ENCODE measurements at regions of chr6 and their contacts with region 1.

Region 1: GRCh38 chr6:15621203-15622044 is 41.4 kb downstream of the DTNBP1 start:
- DNase-seq: peak; percentile 58 to 72 (median 68)
- ATAC-seq: peak; percentile 81 to 95 (median 91)
- H3K4me3 ChIP-seq: no peak overlapping the region
- H3K27ac ChIP-seq: peak overlapping the region; percentile 50 to 87 (median 78)
- H3K4me1 ChIP-seq: peaks cover 0 to 40% (median 31%) of the 10 kb centered on the region in 12 donors
- H3K27me3 ChIP-seq: no peaks in the 10 kb centered on the region
- CTCF ChIP-seq: peak in 1 of 12 donors; percentile 8
- POLR2A ChIP-seq: no peak

Region 2: GRCh38 chr6:15254070-15254841 is 367.2 kb before region 1 on chr6:
- intact Hi-C with region 1: loop called in 6 of 10 experiments (anchors 5 to 10 kb)
- DNase-seq: no peak
- ATAC-seq: no peak
- H3K4me3 ChIP-seq: no peak overlapping the region
- H3K27ac ChIP-seq: peak overlapping the region in 1 of 12 donors; percentile 47
- H3K4me1 ChIP-seq: peaks cover 0 to 95% (median 45%) of the 10 kb centered on the region in 12 donors
- H3K27me3 ChIP-seq: no peaks in the 10 kb centered on the region
- CTCF ChIP-seq: peak in 1 of 12 donors; percentile 11
- POLR2A ChIP-seq: no peak

Region 3: GRCh38 chr6:15504581-15505350 is 116.7 kb before region 1 on chr6:
- intact Hi-C with region 1: loop called in 5 of 10 experiments (anchors 5 to 10 kb)
- DNase-seq: peak; percentile 75 to 81 (median 78)
- ATAC-seq: peak; percentile 72 to 87 (median 78)
- H3K4me3 ChIP-seq: peak overlapping the region in 10 of 12 donors; percentile 10 to 50 (median 33)
- H3K27ac ChIP-seq: peak overlapping the region; percentile 67 to 89 (median 79)
- H3K4me1 ChIP-seq: peaks cover 0 to 56% (median 43%) of the 10 kb centered on the region in 12 donors
- H3K27me3 ChIP-seq: no peaks in the 10 kb centered on the region
- CTCF ChIP-seq: no peak
- POLR2A ChIP-seq: no peak

Region 4: DNA sequence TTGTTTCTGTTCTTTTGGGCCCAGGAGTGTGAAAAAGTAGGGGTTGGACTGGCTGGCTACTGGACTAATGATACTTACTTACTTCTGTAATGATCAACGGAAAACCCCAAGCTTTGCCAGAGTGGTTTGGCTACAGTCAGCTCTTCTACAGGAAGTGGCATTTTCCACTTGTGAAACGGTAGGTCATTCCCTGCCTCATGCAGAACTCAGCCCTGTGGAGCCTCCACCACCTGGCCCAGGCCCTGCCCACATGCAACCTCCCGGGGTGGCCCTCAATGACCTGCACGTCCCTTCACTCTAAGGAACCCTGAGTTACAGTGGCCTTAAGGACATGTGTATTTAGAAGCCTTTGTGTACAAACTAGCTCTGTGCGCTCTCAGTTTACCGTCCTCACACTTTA is 99.0 kb before region 1 on chr6:
- intact Hi-C with region 1: loop called in 4 of 10 experiments (anchors 2 to 5 kb)
- DNase-seq: no peak
- ATAC-seq: peak in 2 of 4 donors; percentile 15 to 26
- H3K4me3 ChIP-seq: no peak overlapping the region
- H3K27ac ChIP-seq: peak overlapping the region in 2 of 12 donors; percentile 4 to 66
- H3K4me1 ChIP-seq: peaks cover 0 to 18% (median 3%) of the 10 kb centered on the region in 12 donors
- H3K27me3 ChIP-seq: no peaks in the 10 kb centered on the region
- CTCF ChIP-seq: no peak
- POLR2A ChIP-seq: no peak

Region 5: DNA sequence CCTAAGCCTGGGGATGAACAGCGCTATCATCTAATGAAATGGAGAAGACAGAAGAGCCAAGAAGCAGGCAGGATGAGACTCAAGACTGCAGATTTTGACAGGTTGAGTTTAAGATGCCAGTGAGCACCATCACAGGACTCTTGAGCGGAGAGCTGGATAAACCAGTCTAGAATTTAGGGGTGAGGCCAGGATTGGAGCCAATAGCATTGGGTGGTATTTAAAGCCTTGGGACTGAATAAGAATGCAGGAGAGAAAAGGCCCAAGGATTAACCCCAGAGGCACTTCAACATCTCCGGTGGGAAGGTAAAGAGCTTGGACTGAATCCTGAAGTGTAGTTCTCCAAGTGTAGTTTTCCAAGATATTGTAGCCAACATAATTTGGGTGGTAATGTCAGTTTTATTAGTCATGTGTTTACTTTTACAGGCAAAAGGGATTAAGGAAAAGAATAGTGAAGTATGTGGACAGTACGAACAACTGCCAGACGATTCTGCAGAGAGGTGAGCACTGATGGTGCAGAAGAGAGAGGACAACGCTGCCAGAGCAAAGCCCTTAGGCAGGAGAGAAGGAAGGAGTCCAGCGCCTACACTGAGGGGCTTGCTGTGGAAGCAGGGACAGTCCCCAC is 43.8 kb before region 1 on chr6:
- intact Hi-C with region 1: no loop called
- DNase-seq: no peak
- ATAC-seq: no peak
- H3K4me3 ChIP-seq: no peak overlapping the region
- H3K27ac ChIP-seq: no peak overlapping the region
- H3K4me1 ChIP-seq: peaks cover 0 to 35% (median 0%) of the 10 kb centered on the region in 12 donors
- H3K27me3 ChIP-seq: no peaks in the 10 kb centered on the region
- CTCF ChIP-seq: no peak
- POLR2A ChIP-seq: no peak